Right cardiac atrium (tissue), 5 donors: ENCODE measurements at regions of chr13 and their contacts with region 1.

Region 1: DNA sequence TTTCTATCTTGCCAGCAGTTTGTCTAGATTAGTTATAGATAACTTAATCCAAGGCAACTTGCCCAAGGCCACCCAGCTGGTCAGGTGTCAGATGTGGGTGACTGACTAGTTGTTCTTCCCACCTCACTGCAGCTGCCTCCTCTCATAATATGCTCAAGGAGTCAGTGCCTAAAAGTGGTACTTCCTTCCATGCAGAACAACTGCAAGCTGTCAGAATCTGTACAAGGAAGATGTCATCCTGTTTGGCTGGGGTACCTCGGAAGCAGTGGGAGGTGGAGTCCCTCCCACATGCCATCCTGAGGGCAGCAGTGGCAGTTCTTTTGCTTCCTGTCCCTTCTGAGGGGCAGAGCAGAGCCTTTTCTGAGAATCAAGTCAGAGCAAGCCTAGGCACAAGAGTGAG is 193.2 kb upstream of the RFC3 start:
- DNase-seq: no peak
- ATAC-seq: no peak
- H3K4me3 ChIP-seq: no peak overlapping the region
- H3K27ac ChIP-seq: no peak overlapping the region
- H3K4me1 ChIP-seq: no peaks in the 10 kb centered on the region
- H3K27me3 ChIP-seq: no peaks in the 10 kb centered on the region

Region 2: DNA sequence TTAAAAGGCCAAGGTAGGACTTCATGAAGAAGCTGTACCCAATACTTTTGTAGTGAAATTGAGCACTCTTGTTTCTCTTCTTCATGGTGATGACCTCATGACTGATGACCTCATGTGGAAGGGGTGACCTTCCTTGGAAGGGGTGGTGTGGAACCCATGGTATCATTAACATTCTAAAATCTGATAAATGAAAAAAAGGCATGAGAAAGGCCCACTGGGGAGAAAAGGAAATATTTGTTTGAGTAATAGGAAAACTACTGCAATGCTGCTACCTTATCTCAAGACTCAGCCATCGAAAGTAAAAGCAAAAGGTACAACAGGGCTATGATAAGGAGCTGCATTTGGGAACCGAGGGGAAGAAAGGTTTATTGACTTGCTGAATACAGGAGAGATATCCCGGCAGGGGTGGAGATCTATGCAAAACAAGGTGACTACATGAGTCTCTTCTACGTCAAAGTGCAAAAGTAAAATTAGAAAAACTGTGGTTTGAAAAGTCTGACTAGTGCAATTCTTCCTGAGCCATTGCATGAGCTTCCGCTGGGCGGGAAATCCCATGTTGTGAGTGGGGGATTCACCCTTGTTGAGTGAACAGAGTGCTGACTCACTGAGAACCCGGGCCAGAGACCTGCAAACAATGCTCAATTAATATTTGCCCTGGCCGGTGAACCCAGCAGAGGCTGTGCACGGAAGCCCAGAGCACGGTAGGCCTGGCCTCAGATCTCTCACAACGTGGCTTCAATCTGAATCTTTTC is 54.3 kb after region 1 on chr13:
- intact Hi-C with region 1: loop called in 1 of 4 experiments (anchors 5 kb)
- DNase-seq: peak; percentile 67 to 75 (median 69)
- ATAC-seq: peak; percentile 69 to 88
- H3K4me3 ChIP-seq: no peak overlapping the region
- H3K27ac ChIP-seq: peak overlapping the region; percentile 45
- H3K4me1 ChIP-seq: peaks cover 5% of the 10 kb centered on the region
- H3K27me3 ChIP-seq: no peaks in the 10 kb centered on the region

Region 3: GRCh38 chr13:33696530-33696929 is 71.8 kb after region 1 on chr13:
- intact Hi-C with region 1: no loop called
- DNase-seq: no peak
- ATAC-seq: no peak
- H3K4me3 ChIP-seq: no peak overlapping the region
- H3K27ac ChIP-seq: no peak overlapping the region
- H3K4me1 ChIP-seq: no peaks in the 10 kb centered on the region
- H3K27me3 ChIP-seq: no peaks in the 10 kb centered on the region

Region 4: DNA sequence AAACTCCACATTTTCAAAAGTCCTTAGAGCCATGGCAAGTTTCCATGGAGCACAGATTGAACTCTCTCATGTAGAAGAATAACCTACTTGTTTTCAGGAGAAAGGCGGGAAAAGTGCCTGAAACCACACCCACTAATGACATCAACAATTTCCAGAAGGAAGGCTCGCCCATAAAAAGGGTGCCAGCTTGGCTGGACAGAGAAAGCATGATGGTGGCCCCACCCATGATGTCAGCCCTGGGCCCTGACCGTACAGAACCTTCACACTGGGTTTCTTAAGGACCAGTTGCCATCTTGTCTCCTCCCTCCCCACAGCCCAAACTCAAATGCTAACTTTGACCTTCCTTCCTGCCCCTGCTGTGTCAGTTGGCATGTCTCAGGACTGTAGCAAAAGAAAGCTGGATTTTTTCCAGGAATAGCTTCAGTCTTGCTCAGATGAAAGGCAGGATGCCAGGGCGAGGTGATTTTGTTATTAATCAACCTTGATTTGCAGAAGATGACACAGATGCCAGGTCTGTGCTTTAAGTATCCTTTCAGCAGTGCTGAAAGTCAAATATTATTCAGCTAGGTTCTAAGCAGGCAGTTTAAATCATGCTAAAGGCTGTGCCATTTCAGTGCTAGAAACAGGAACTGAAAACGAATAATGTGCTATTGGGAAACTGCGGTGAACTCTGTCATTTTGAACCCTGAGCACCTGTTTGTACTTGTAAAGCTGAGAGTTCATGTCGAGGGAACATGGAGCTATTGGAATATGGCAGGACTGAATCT is 103.7 kb after region 1 on chr13:
- intact Hi-C with region 1: no loop called
- DNase-seq: peak; percentile 77 to 90 (median 84)
- ATAC-seq: peak; percentile 88 to 93
- H3K4me3 ChIP-seq: no peak overlapping the region
- H3K27ac ChIP-seq: peak overlapping the region; percentile 64
- H3K4me1 ChIP-seq: peaks cover 2% of the 10 kb centered on the region
- H3K27me3 ChIP-seq: no peaks in the 10 kb centered on the region

Region 5: DNA sequence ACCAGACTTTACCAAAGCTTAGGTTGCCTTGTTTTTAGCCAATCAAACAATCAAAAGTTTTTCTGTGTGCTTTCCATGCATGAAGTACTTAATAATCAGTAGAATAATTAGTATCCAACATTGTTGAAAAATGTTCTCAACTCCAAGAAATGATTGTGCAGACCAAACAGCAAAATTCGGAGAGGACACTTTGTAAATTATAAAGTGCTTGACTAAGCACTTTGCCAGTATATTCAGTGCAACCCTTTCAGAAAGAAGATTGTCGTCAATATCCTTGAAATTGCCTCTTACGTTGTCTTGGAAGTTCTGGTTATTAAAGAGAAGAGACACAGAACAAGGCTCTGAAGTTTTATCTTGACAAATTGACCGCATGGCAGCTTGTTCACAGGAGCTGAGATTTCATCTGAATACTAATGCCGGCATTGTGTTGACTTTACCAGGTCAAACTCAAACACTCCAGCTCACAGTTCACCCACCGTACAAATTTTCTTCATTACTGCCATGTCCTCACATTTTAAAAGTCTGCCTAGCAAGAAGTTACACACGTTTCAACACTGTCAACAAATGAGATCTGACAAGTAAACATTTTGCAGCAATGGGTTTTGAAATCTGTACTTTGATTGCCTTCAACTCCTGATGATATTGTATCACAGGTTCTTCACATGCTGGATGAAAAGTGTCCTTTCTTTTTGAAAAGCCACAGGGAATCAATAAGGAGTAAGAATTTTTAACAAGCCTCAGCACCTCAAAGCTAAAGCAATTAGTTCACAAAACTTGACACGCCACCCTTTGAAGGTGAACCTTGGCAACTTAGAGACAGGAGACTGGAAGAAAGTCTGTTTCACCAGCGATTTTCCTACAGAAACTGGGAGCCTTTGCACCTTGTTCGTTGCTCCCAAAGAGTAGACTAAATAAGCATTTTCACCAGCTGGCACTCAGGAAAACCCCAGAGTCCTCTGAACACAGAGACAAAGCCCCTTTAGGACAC is 344.1 kb after region 1 on chr13:
- intact Hi-C with region 1: no loop called
- DNase-seq: no peak
- ATAC-seq: no peak
- H3K4me3 ChIP-seq: no peak overlapping the region
- H3K27ac ChIP-seq: no peak overlapping the region
- H3K4me1 ChIP-seq: no peaks in the 10 kb centered on the region
- H3K27me3 ChIP-seq: no peaks in the 10 kb centered on the region